ENCODE measurements at regions of chr12 and their contacts with region 1.

Region 1: GRCh38 chr12:98516184-98516873 is 939 bp downstream of the TMPO start:
- DNase-seq: peak; percentile 81
- ATAC-seq: peak; percentile 37

Region 2: GRCh38 chr12:98424726-98425401 is 91.5 kb before region 1 on chr12:
- intact Hi-C with region 1: loop called (anchors 10 kb)
- DNase-seq: peak; percentile 80
- ATAC-seq: peak; percentile 79

Region 3: GRCh38 chr12:98492580-98493140 is 23.7 kb before region 1 on chr12:
- intact Hi-C with region 1: loop called (anchors 1 kb)
- DNase-seq: no peak
- ATAC-seq: no peak